PC-9 (cell line): ENCODE measurements at regions of chr13 and their contacts with region 1.

Region 1: GRCh38 chr13:24759197-24759596 is 4.8 kb upstream of the RNF17 start:
- DNase-seq: no peak
- H3K4me3 ChIP-seq: no peak overlapping the region
- H3K27ac ChIP-seq: no peak overlapping the region
- H3K4me1 ChIP-seq: no peaks in the 10 kb centered on the region
- H3K27me3 ChIP-seq: no peaks in the 10 kb centered on the region
- CTCF ChIP-seq: no peak

Region 2: GRCh38 chr13:24693862-24694471 is 65.2 kb before region 1 on chr13:
- CTCF ChIA-PET with region 1: no interaction called
- POLR2A ChIA-PET with region 1: interaction called, 18 read pairs
- intact Hi-C with region 1: no loop called
- DNase-seq: peak; percentile 31 to 59
- H3K4me3 ChIP-seq: no peak overlapping the region
- H3K27ac ChIP-seq: no peak overlapping the region
- H3K4me1 ChIP-seq: no peaks in the 10 kb centered on the region
- H3K27me3 ChIP-seq: peaks cover 22% of the 10 kb centered on the region
- CTCF ChIP-seq: peak; percentile 82

Region 3: DNA sequence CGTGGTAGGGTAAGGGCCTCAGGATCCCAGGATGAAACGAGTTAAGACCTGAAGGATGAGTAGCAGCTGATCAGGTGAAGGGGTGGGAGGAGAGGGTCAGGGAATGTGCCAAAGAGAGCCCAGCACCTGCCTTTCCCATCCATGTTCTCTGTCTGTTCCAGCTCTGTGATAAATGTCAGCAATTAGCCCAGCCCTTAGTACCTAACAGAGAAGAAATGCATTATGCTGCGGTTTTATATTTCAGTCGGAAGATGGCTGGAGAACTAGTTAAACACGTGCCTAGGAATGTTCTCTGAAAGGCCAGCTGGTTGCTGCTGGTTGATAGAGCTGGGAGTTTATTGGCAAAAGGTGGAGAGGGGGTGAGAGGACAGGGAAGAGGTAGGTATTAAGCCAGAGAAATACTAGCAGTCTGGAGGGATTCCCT is 1024.4 kb after region 1 on chr13:
- CTCF ChIA-PET with region 1: no interaction called
- POLR2A ChIA-PET with region 1: no interaction called
- intact Hi-C with region 1: no loop called
- DNase-seq: no peak
- H3K4me3 ChIP-seq: no peak overlapping the region
- H3K27ac ChIP-seq: no peak overlapping the region
- H3K4me1 ChIP-seq: no peaks in the 10 kb centered on the region
- H3K27me3 ChIP-seq: peaks cover 69% of the 10 kb centered on the region
- CTCF ChIP-seq: no peak